Activated CD4-positive, alpha-beta T cell treated with anti-CD3 and anti-CD28 coated beads for 36 hours (primary cell): ENCODE measurements at regions of chr1 and their contacts with region 1.

Region 1: DNA sequence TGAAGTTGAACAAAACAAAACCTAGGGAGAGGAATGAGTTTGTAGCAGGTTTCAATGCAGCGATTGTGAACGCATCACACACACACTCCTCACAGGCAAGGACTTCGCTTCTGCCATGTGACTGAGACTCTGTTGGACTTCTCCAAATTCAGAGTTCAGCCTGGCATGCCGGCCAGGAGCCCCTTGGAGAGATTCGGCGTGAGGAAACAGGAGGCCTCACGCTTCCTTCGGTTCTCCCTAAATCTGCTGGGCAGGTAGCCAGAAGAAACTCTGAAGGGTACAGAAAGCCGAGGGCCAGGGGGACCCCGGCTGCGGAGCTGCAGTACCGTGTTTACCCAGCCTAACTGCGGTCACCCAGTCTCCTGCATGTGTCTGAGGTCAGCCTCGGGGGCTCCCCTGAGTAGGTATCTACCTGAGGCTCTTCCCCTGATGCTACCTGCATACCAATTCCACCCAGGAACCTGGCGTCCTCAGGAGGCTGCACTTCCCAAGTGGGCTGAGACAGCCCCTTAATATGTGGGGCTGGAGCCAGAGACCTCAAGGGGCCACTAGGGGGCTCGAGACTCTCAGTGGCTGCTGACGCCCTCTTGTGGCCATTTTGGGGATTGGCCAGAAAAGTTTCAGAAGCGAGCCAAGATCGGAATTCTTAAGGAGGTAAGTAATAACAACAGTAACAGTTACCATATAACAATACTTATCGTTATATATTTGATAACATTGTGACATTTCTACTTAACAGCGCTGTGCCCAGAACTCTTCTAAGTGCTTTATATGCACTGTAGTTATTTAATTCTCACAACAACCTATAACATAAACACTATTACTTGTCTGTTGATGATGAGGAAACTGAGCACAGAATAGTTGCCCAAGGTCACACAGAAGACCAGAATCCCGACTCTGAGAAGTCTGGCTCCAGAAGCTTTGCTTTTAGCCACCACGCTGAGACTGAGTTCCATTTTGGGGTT is 2.7 kb upstream of the ANXA9 start:
- DNase-seq: peak; percentile 94
- ATAC-seq: peak; percentile 53
- H3K4me3 Mint-ChIP-seq: no peak overlapping the region
- H3K27ac Mint-ChIP-seq: peak overlapping the region; percentile 63
- H3K4me1 Mint-ChIP-seq: peaks cover 39% of the 10 kb centered on the region
- H3K27me3 Mint-ChIP-seq: no peaks in the 10 kb centered on the region

Region 2: DNA sequence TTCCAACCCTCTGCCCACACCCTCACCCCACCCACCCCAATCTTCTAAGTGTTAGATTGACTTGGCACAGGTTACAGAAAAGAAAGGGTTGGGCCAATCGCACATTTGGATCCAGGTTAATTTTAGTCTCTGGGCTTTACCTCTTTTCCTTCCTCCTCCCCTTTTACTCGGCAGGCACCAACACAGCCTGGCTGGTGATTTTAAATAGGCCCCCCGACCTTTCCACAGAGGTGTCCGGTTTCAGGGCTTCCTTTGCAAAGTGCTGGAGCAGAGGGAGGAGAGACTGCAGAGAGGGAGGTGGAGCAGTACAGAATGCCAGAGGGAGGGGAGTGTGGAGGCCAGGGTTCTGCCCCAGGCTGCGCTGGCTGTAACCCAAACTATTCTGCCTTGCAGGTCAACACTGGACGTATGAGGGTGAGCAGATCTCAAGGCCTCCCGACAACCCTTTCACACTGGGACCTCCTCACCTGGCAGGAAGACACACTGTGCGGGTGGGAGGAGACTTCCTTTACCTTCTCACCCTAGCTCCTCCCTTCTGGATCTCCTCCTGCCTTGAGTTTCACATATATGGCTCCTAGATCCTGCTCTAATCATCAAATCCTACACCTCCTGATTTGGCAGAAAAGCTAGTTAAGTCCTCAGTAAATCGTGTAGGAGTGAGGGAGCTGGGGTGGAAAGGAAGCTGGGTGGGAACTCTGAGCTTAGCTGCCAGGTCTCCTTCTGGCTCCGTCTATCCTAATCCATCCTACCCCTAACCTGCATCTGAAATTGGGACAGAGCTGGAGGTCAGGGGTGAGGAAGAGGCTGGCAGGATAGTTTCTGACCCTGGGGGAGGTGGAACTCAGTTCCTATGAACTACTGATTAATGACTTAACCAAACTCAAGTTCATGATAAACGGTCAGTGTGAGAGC is 719.4 kb before region 1 on chr1:
- CTCF ChIA-PET with region 1: interaction called, 3 read pairs
- POLR2A ChIA-PET with region 1: no interaction called
- intact Hi-C with region 1: loop called in 1 of 2 experiments (anchors 1 kb)
- DNase-seq: no peak
- ATAC-seq: no peak
- H3K4me3 Mint-ChIP-seq: no peak overlapping the region
- H3K27ac Mint-ChIP-seq: no peak overlapping the region
- H3K4me1 Mint-ChIP-seq: peaks cover 11% of the 10 kb centered on the region
- H3K27me3 Mint-ChIP-seq: peaks cover 26% of the 10 kb centered on the region

Region 3: DNA sequence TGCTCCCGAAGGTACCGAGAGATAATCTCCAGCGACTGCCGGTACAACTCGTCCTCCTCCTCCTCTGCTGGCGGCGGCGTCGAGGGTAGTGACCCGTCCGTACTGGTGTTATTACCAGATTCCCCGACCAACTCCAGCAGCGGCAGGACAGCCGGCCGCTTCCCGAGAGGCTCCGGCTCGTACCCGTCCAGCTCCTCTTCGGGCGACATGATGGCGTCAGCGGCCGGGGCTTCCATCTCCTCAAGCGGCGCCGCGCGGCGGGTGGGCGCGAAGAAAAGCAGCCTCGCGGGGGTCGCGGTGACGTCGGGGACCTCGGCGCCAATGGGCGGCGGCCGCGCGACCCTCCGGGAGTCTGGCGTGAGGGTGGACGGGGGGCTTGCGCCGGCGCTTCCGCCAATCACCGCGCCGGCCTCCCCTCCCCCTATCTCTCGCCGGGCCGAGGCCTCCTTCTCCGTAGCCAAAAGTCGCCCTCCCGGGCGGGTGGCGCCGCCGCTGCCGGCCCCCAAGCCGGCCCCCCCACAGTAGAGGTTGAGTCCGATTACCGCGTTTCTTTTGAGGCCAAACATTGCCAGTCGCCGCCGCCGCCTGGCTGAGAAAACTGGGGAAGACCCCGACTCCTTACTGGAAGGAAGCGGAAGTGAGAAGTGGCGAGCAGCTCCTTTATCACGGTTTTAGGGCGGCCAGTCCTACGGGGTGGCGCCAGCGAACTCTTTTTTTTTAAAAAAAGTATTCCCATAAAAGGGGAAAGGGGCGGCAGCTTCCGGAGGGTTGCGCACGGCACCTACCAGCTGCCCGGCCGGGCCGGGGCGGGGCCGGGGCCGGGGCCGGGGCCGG is 400.2 kb before region 1 on chr1 and contains the start of gene MCL1:
- CTCF ChIA-PET with region 1: interaction called, 4 read pairs
- POLR2A ChIA-PET with region 1: no interaction called
- intact Hi-C with region 1: loop called in 1 of 2 experiments (anchors 5 kb)
- DNase-seq: peak; percentile 94
- ATAC-seq: peak; percentile 81
- H3K4me3 Mint-ChIP-seq: peak within 1 kb of the TSS; percentile 95
- H3K27ac Mint-ChIP-seq: peak within 1 kb of the TSS; percentile 97
- H3K4me1 Mint-ChIP-seq: peaks cover 24% of the 10 kb centered on the region
- H3K27me3 Mint-ChIP-seq: no peaks in the 10 kb centered on the region
- total RNA-seq, gene MCL1: 185 to 265 TPM

Region 4: GRCh38 chr1:150696590-150697524 is 282.5 kb before region 1 on chr1 and contains the start of gene GOLPH3L:
- CTCF ChIA-PET with region 1: no interaction called
- POLR2A ChIA-PET with region 1: no interaction called
- intact Hi-C with region 1: loop called (anchors 1 to 10 kb)
- DNase-seq: peak; percentile 93
- ATAC-seq: peak; percentile 100
- H3K4me3 Mint-ChIP-seq: peak within 1 kb of the TSS; percentile 98
- H3K27ac Mint-ChIP-seq: peak within 1 kb of the TSS; percentile 92
- H3K4me1 Mint-ChIP-seq: peaks cover 21% of the 10 kb centered on the region
- H3K27me3 Mint-ChIP-seq: peaks cover 3% of the 10 kb centered on the region
- total RNA-seq, gene GOLPH3L: 24.2 to 29.1 TPM

Region 5: DNA sequence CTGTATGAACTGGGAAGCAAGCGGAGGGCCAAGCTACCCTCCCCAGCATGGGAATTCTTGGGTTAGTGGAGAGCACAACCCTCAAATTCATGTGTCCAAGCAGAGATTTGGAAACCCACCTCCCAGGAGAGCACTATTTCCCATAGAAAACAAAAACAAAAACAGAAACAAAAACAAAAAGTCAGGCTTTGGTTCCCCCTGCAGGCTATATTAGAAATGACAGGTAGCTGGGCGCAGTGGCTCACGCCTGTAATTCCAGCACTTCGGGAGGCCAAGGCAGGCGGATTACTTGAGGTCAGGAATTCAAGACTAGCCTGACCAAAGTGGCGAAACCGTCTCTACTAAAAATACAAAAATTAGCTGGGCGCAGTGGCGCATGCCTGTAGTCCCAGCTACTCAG is 16.5 kb after region 1 on chr1:
- CTCF ChIA-PET with region 1: interaction called, 90 read pairs
- POLR2A ChIA-PET with region 1: no interaction called
- intact Hi-C with region 1: no loop called
- DNase-seq: peak; percentile 47
- ATAC-seq: peak; percentile 34
- H3K4me3 Mint-ChIP-seq: no peak overlapping the region
- H3K27ac Mint-ChIP-seq: no peak overlapping the region
- H3K4me1 Mint-ChIP-seq: peaks cover 18% of the 10 kb centered on the region
- H3K27me3 Mint-ChIP-seq: no peaks in the 10 kb centered on the region

Region 6: GRCh38 chr1:151059078-151059907 is 79.9 kb after region 1 on chr1 and contains the start of gene CDC42SE1:
- CTCF ChIA-PET with region 1: no interaction called
- POLR2A ChIA-PET with region 1: interaction called, 3 read pairs
- intact Hi-C with region 1: loop called in 1 of 2 experiments (anchors 1 kb)
- DNase-seq: peak; percentile 92
- ATAC-seq: peak; percentile 75
- H3K4me3 Mint-ChIP-seq: peak within 1 kb of the TSS; percentile 93
- H3K27ac Mint-ChIP-seq: peak within 1 kb of the TSS; percentile 98
- H3K4me1 Mint-ChIP-seq: peaks cover 54% of the 10 kb centered on the region
- H3K27me3 Mint-ChIP-seq: no peaks in the 10 kb centered on the region
- total RNA-seq, gene CDC42SE1: 95.4 to 101 TPM

Region 7: GRCh38 chr1:151113877-151114276 is 134.5 kb after region 1 on chr1:
- CTCF ChIA-PET with region 1: no interaction called
- POLR2A ChIA-PET with region 1: no interaction called
- intact Hi-C with region 1: no loop called
- DNase-seq: no peak
- ATAC-seq: no peak
- H3K4me3 Mint-ChIP-seq: no peak overlapping the region
- H3K27ac Mint-ChIP-seq: no peak overlapping the region
- H3K4me1 Mint-ChIP-seq: no peaks in the 10 kb centered on the region
- H3K27me3 Mint-ChIP-seq: no peaks in the 10 kb centered on the region